ENCODE measurements at regions of chr14 and their contacts with region 1.

Region 1: GRCh38 chr14:49786315-49787110 is 18.6 kb downstream of the KLHDC2 start:
- DNase-seq: no peak
- ATAC-seq: no peak
- H3K4me3 ChIP-seq: no peak overlapping the region
- H3K27ac ChIP-seq: no peak overlapping the region
- H3K4me1 ChIP-seq: no peaks in the 10 kb centered on the region
- H3K27me3 ChIP-seq: no peaks in the 10 kb centered on the region
- CTCF ChIP-seq: no peak
- POLR2A ChIP-seq: no peak

Region 2: DNA sequence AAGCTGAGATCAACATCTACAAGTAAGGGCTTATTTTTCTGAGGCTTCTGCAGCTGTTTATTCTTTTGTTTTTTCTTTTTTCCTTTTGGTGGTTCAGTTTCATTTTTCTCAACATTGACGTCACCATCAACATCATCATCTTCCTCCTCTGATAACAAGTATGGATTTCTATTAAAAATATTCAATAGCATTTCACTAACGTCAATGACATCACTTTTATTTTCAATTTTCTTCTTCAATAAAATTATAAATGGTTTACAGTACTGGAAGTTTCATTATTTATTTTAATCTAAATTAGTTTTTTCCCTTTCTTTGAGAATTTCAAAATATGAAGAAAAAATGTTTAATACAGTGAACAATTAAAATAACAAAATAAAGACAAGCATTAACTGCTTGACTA is 42.1 kb after region 1 on chr14:
- intact Hi-C with region 1: loop called (anchors 10 kb)
- DNase-seq: no peak
- ATAC-seq: no peak
- H3K4me3 ChIP-seq: no peak overlapping the region
- H3K27ac ChIP-seq: no peak overlapping the region
- H3K4me1 ChIP-seq: no peaks in the 10 kb centered on the region
- H3K27me3 ChIP-seq: no peaks in the 10 kb centered on the region
- CTCF ChIP-seq: no peak
- POLR2A ChIP-seq: no peak

Region 3: GRCh38 chr14:50249136-50249800 is 462.8 kb after region 1 on chr14:
- intact Hi-C with region 1: no loop called
- DNase-seq: no peak
- ATAC-seq: no peak
- H3K4me3 ChIP-seq: no peak overlapping the region
- H3K27ac ChIP-seq: no peak overlapping the region
- H3K4me1 ChIP-seq: no peaks in the 10 kb centered on the region
- H3K27me3 ChIP-seq: no peaks in the 10 kb centered on the region
- CTCF ChIP-seq: no peak
- POLR2A ChIP-seq: no peak

Measured in body of pancreas (tissue), 4 donors.